Mammary epithelial cell (primary cell): ENCODE measurements at regions of chrX and their contacts with region 1.

Region 1: GRCh38 chrX:54529552-54530357 is at the start of gene GNL3L:
- DNase-seq: peak; percentile 80
- H3K4me3 ChIP-seq: peak within 1 kb of the TSS; percentile 52 to 82 (median 57)
- H3K27ac ChIP-seq: peak within 1 kb of the TSS; percentile 65
- H3K4me1 ChIP-seq: peaks cover 11% of the 10 kb centered on the region
- H3K27me3 ChIP-seq: no peaks in the 10 kb centered on the region
- CTCF ChIP-seq: no peak
- total RNA-seq, gene GNL3L: 39.4 to 42.3 TPM

Region 2: DNA sequence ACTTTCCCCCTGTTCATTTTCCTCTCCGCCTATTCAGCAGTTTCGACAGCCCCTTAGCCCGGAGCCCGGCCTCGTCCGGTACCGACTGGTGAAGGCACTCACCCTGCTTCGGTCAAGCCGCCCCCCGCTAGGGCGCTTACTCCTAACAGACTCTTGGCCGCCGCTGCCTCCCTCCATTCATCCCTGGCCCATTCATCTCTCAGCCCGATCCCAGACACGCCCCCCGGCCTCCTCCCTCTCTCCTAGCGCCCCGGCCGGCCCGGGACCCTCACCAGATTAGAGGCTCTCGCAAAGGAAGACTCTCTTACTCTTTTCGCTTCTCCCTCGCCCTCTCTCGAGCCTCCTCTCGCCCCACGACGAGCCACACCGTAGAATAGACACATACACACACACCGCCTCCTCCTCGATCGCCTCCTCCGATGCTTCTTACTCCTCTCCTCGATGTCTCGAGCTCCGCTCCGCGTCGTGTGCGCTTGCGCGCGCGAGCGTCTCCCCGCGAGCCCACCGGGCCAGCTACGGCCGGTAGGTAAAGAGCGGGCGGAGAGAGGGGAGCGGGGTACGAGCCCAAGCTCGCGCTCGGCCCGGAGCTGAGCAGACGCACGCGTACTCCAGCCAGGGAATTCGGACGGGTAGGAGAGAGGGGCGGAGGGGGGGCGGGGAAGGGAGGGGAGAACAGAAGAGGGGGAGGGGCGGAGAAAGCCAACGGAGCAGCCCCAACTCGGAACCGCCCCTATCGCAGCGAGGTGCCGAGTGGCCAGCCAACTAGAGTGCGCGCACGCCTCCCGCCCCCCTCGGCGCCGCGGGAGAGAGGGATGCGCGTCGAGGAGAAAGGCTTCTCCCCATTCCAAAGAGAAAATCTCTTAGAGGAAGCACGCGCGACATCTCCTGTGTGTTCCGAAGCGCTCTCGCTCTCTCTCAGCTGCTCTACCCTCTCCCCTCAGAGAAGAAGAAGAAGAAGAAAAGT is 172.1 kb before region 1 on chrX and contains the start of gene WNK3:
- CTCF ChIA-PET with region 1: no interaction called
- dilution Hi-C with region 1: no loop called
- in situ Hi-C with region 1: no loop called
- intact Hi-C with region 1: no loop called
- DNase-seq: peak; percentile 32
- H3K4me3 ChIP-seq: peak within 1 kb of the TSS; percentile 44 to 55 (median 44)
- H3K27ac ChIP-seq: no peak within 1 kb of the TSS
- H3K4me1 ChIP-seq: no peaks in the 10 kb centered on the region
- H3K27me3 ChIP-seq: peaks cover 9% of the 10 kb centered on the region
- CTCF ChIP-seq: no peak
- total RNA-seq, gene WNK3: 0.21 to 4.3 TPM

Region 3: GRCh38 chrX:54473993-54474859 is 55.5 kb before region 1 on chrX:
- CTCF ChIA-PET with region 1: no interaction called
- dilution Hi-C with region 1: no loop called
- in situ Hi-C with region 1: no loop called
- intact Hi-C with region 1: loop called (anchors 2 kb)
- DNase-seq: peak; percentile 76
- H3K4me3 ChIP-seq: peak overlapping the region; percentile 44 to 55 (median 47)
- H3K27ac ChIP-seq: peak overlapping the region; percentile 48
- H3K4me1 ChIP-seq: peaks cover 7% of the 10 kb centered on the region
- H3K27me3 ChIP-seq: no peaks in the 10 kb centered on the region
- CTCF ChIP-seq: no peak

Region 4: DNA sequence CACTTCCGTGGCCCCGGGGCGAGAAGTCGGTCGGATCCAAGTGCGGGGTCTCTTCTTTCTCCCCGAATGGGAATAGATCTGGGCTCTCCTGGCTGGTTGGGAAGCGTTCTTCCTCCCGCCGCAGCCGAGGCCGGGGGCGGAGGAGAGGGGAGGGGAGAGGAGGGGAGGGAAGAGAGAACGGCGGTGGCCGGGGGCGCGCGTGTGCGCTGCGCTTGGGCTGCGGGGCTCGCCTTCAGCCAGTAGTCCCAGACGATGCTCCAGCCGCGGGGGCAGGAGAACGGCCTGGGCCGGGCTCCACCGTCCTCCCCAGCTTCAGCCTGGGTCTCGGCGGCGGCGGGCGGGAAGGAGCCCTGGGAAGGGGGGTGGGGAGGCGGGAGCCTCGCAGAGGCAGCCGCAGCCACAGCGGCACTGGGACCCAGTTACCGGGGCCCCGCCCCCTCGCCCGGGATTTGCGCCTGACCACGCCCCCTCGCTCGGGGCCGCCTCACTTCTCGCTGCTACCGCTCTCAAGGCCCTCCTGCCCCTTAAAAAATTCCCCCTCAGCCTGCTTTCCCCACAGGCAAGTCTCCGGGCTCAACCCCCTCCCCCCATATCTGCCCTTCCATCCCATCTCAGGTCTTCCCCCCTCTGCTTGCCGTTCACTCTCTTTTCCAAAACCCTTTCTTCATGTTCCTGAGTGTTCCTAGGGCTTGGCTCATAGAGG is 33.8 kb before region 1 on chrX and contains the start of gene FGD1:
- CTCF ChIA-PET with region 1: no interaction called
- dilution Hi-C with region 1: no loop called
- in situ Hi-C with region 1: no loop called
- intact Hi-C with region 1: loop called (anchors 2 kb)
- DNase-seq: peak; percentile 37
- H3K4me3 ChIP-seq: peak within 1 kb of the TSS; percentile 54 to 65 (median 64)
- H3K27ac ChIP-seq: peak within 1 kb of the TSS; percentile 23
- H3K4me1 ChIP-seq: peaks cover 4% of the 10 kb centered on the region
- H3K27me3 ChIP-seq: no peaks in the 10 kb centered on the region
- CTCF ChIP-seq: no peak
- total RNA-seq, gene FGD1: 5.5 to 16.0 TPM